ENCODE measurements at regions of chr7 and their contacts with region 1.

Region 1: DNA sequence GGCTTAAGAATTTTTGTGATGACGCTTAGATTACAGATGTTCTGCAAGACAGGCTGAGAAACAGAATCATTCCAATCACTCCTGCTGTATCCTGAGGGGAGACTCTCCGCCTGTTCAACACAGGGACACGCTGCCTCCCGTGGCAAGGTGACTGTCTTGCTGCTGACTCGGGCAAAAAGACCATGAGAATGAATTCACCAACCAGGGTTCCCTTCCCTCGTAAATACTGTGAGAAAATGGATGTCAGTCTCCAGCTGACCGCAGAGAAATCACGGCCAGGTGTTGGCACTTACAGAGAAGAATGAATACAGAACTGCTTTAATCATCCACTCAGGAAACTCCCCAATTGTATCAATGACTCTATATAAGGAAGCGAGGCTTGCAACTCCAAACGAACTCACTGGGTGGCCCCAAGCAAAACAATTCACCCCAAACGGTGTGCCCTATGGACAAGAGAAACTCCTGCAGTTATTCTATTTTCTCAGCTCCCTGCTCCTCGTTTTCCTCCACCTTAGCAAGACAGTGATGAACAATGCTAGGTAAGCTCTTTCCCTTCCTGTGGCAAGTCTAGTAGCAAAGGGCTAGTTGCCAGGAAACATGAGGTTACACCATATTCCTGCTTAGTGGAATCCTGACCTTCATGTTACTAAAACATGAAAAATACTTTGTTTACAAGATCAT is 22.8 kb downstream of the GNA12 start:
- DNase-seq: peak; percentile 53
- ATAC-seq: peak; percentile 86
- H3K4me3 ChIP-seq: no peak overlapping the region
- H3K27ac ChIP-seq: peak overlapping the region; percentile 4; the same call in 1 of the 2 replicates
- H3K4me1 ChIP-seq: peaks cover 49% of the 10 kb centered on the region
- H3K27me3 ChIP-seq: no peaks in the 10 kb centered on the region
- CTCF ChIP-seq: peak in 2 of 3 experiments; percentile 6 to 8; a peak in 2 of 6 replicates
- EP300 ChIP-seq: peak; percentile 63 to 70; a peak in 2 of 4 replicates
- POLR2A ChIP-seq: no peak
- RAD21 ChIP-seq: peak; percentile 27; the same call in 1 of the 2 replicates

Region 2: DNA sequence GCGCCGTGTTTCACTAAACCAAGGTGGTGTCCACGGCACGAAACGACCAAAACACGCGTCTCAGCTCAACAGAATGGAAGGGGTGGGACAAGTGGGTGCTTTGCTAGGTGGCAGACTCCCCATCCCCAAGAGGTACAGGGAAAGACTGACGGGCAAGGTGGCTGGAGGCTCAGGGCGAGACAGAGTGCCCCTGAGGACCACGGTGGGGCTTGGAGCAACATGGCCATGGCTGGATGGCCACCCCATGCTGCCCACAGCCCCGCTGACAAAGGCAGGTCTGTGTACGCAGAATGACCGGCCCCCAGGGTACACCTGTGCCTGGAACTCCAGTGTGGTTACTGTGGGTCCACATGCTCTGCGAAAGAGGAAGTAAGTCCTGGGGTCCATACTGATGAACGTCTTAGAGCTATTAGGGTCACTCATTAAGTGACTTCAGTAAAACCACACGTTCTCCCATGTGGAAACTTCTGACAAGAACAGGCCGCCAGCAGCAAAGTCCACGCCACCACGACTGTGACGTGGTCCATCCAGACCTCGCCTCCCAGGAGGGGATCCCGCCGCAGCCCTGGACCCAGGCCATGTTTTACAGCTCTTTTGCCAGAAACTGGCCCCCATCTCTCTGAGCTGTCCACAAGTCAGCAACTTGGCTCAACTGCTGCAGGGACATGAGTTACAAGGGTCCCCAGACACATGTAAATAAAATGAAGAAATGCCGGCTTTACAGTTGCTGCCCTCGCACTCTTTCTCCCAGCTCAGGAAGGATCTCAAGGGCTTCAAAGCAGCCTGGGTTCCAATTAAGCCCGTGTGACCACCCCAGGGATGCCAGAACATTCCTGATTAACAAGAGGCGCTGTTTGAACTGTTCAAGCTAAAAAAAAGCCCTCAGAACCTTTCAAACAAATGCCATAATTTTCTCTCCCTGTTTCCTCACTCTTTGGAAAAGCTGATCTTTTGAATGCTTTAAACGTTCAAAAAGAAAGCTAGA is 655.4 kb before region 1 on chr7:
- CTCF ChIA-PET with region 1: no interaction called
- POLR2A ChIA-PET with region 1: no interaction called
- RAD21 ChIA-PET with region 1: no interaction called
- SMC1A ChIA-PET with region 1: no interaction called
- in situ Hi-C with region 1: no loop called
- intact Hi-C with region 1: no loop called
- DNase-seq: peak; percentile 79
- ATAC-seq: peak; percentile 95
- H3K4me3 ChIP-seq: no peak overlapping the region; the same call in 1 of the 2 replicates
- H3K27ac ChIP-seq: peak overlapping the region; percentile 74
- H3K4me1 ChIP-seq: peaks cover 22% of the 10 kb centered on the region
- H3K27me3 ChIP-seq: no peaks in the 10 kb centered on the region
- CTCF ChIP-seq: no peak
- EP300 ChIP-seq: peak; percentile 93 to 97
- POLR2A ChIP-seq: no peak
- RAD21 ChIP-seq: no peak

Region 3: GRCh38 chr7:2785071-2785500 is 36.2 kb before region 1 on chr7:
- CTCF ChIA-PET with region 1: interaction called, 4 read pairs
- POLR2A ChIA-PET with region 1: interaction called, 3 read pairs
- RAD21 ChIA-PET with region 1: interaction called, 6 read pairs
- SMC1A ChIA-PET with region 1: interaction called, 11 read pairs
- in situ Hi-C with region 1: no loop called
- intact Hi-C with region 1: no loop called
- DNase-seq: peak; percentile 40
- ATAC-seq: peak; percentile 94
- H3K4me3 ChIP-seq: no peak overlapping the region
- H3K27ac ChIP-seq: no peak overlapping the region
- H3K4me1 ChIP-seq: no peaks in the 10 kb centered on the region
- H3K27me3 ChIP-seq: no peaks in the 10 kb centered on the region
- CTCF ChIP-seq: no peak
- EP300 ChIP-seq: peak; percentile 49 to 74; a peak in 3 of 4 replicates
- POLR2A ChIP-seq: no peak
- RAD21 ChIP-seq: no peak

Region 4: GRCh38 chr7:2800931-2801688 is 20.2 kb before region 1 on chr7:
- CTCF ChIA-PET with region 1: interaction called, 5 read pairs
- POLR2A ChIA-PET with region 1: interaction called, 17 read pairs
- RAD21 ChIA-PET with region 1: interaction called, 14 read pairs
- SMC1A ChIA-PET with region 1: interaction called, 24 read pairs
- in situ Hi-C with region 1: no loop called
- intact Hi-C with region 1: no loop called
- DNase-seq: no peak
- ATAC-seq: peak; percentile 45
- H3K4me3 ChIP-seq: no peak overlapping the region
- H3K27ac ChIP-seq: no peak overlapping the region
- H3K4me1 ChIP-seq: peaks cover 8% of the 10 kb centered on the region; the same call in 1 of the 2 replicates
- H3K27me3 ChIP-seq: no peaks in the 10 kb centered on the region
- CTCF ChIP-seq: no peak
- EP300 ChIP-seq: no peak
- POLR2A ChIP-seq: no peak
- RAD21 ChIP-seq: no peak

Region 5: DNA sequence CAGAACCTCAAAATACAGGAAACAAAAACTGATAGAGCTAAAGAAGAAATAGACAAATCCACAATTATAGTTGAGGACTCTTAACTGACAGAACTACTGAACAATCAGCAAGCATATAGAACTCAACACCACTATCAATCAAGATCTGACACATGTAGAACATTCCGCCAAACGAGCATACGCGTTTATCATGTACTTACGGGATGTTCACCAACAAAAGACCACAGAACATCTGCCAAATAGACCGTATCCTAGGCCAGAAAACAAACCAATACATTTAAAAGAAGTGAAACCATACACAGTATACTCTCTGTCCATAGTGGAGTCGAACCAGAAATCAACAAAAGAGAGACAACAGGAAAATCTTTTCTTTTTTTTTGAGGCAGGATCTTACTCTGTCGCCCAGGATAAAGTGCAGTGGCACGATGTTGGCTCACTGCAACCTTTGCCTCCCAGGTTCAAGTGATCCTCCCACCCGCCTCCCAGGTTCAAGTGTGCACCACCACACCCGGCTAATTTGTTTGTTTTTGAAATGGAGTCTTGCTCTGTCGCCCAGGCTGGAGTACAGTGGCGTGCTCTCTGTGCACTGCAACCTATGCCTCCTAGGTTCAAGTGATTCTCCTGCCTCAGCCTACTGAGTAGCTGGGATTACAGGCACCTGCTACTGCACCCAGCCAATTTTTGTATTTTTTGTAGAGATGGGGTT is 17.7 kb after region 1 on chr7:
- CTCF ChIA-PET with region 1: interaction called, 4 read pairs
- POLR2A ChIA-PET with region 1: interaction called, 8 read pairs
- RAD21 ChIA-PET with region 1: interaction called, 12 read pairs
- SMC1A ChIA-PET with region 1: interaction called, 12 read pairs
- in situ Hi-C with region 1: no loop called
- intact Hi-C with region 1: no loop called
- DNase-seq: no peak
- ATAC-seq: peak; percentile 85
- H3K4me3 ChIP-seq: peak overlapping the region; percentile 18; the same call in 1 of the 2 replicates
- H3K27ac ChIP-seq: no peak overlapping the region
- H3K4me1 ChIP-seq: peaks cover 30% of the 10 kb centered on the region
- H3K27me3 ChIP-seq: no peaks in the 10 kb centered on the region
- CTCF ChIP-seq: no peak
- EP300 ChIP-seq: peak in 1 of 2 experiments; percentile 30; a peak in 1 of 4 replicates
- POLR2A ChIP-seq: no peak
- RAD21 ChIP-seq: no peak

Region 6: DNA sequence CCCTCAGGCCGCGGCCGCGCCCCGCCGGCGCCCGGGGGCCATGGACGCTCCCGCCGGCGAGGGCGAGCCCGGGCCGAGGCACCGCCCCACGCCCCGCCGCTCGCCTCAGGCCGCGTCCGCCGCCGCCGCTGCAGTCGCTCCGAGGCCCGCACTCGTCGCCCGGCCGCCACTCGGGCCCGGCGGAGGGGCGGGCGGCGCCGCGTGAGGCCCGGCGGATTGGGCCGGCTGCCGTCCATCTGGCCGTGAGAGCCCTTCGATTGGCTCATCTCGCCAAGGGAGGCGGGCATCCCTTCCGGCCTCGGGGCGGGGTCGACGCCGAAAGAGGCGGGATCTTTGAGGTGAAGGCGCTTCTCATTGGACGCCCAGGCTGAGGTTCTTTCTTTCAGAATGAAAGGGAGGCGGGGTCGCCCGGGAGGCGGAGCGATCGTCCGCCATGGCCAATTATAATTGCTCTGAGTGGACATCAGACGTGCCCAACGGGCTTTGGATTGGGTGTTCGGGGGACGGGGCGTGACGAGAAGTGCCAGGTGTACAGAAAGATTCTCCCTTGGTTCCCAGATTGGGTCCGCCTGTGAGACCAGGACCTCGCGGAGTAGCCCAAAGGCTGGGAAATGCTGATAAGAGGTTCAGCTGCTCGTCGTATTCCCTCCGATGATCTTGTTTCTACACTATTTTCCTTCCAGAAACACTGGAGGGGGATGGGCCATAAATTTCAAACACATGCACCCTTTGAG is 23.0 kb after region 1 on chr7 and contains the start of gene GNA12:
- CTCF ChIA-PET with region 1: interaction called, 4 read pairs
- POLR2A ChIA-PET with region 1: interaction called, 6 read pairs
- RAD21 ChIA-PET with region 1: interaction called, 12 read pairs
- SMC1A ChIA-PET with region 1: interaction called, 12 read pairs
- in situ Hi-C with region 1: no loop called
- intact Hi-C with region 1: no loop called
- DNase-seq: peak; percentile 94
- ATAC-seq: peak; percentile 97
- H3K4me3 ChIP-seq: peak within 1 kb of the TSS; percentile 80
- H3K27ac ChIP-seq: peak within 1 kb of the TSS; percentile 33; the same call in 1 of the 2 replicates
- H3K4me1 ChIP-seq: peaks cover 8% of the 10 kb centered on the region
- H3K27me3 ChIP-seq: no peaks in the 10 kb centered on the region
- CTCF ChIP-seq: no peak
- EP300 ChIP-seq: no peak
- POLR2A ChIP-seq: peak; percentile 69
- RAD21 ChIP-seq: no peak
- polyA plus RNA-seq, gene GNA12: 1.9 to 3.0 TPM

Region 7: DNA sequence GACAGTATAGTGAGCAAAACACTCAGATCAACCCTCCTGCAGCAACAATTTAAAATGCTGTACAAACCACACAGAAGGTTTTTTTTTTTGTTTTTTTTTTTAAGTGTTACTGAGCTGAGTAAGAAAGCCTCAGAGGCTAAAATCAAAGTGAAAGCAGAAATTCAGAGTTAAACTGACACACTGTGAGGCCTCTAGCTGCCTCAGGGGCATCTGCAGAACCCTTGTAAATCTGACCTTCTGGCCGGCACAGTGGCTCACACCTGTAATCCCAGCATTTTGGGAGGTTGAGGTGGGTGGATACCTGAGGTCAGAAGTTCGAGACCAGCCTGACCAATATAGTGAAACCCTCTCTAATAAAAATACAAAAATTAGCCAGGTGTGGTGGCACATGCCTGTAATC is 30.2 kb after region 1 on chr7:
- CTCF ChIA-PET with region 1: interaction called, 3 read pairs
- POLR2A ChIA-PET with region 1: interaction called, 4 read pairs
- RAD21 ChIA-PET with region 1: interaction called, 6 read pairs
- SMC1A ChIA-PET with region 1: interaction called, 10 read pairs
- in situ Hi-C with region 1: no loop called
- intact Hi-C with region 1: no loop called
- DNase-seq: no peak
- ATAC-seq: peak; percentile 92
- H3K4me3 ChIP-seq: no peak overlapping the region
- H3K27ac ChIP-seq: 0 out of 2 replicates have a peak overlapping the region, but pooled peaks have one; percentile 18
- H3K4me1 ChIP-seq: peaks cover 6% of the 10 kb centered on the region
- H3K27me3 ChIP-seq: no peaks in the 10 kb centered on the region
- CTCF ChIP-seq: no peak
- EP300 ChIP-seq: no peak
- POLR2A ChIP-seq: no peak
- RAD21 ChIP-seq: no peak

Region 8: DNA sequence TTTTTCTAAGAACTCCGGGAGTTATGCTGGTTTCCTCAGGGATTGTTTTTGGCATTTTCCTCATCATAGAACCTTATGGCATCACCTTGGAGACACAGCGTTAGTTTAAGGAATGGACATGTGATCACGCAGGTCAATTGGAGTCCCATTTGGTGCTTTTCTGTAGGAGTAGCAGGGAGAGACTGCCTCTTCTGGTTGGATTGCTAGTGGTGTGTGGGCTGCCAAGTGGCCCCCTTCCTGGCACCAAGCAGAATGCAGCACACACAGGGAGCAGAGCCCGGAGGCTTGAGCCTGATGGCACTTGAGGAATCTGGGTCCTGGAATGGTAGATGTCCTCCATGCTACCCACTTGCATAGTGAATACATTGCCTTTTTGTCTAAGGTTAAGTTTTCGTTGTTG is 537.7 kb after region 1 on chr7:
- CTCF ChIA-PET with region 1: no interaction called
- POLR2A ChIA-PET with region 1: no interaction called
- RAD21 ChIA-PET with region 1: no interaction called
- SMC1A ChIA-PET with region 1: no interaction called
- in situ Hi-C with region 1: no loop called
- intact Hi-C with region 1: no loop called
- DNase-seq: no peak
- ATAC-seq: no peak
- H3K4me3 ChIP-seq: no peak overlapping the region
- H3K27ac ChIP-seq: no peak overlapping the region
- H3K4me1 ChIP-seq: no peaks in the 10 kb centered on the region
- H3K27me3 ChIP-seq: no peaks in the 10 kb centered on the region
- CTCF ChIP-seq: no peak
- EP300 ChIP-seq: no peak
- POLR2A ChIP-seq: no peak
- RAD21 ChIP-seq: no peak

Measured in GM12878 (cell line).